ENCODE measurements at regions of chr7 and their contacts with region 1.

Region 1: GRCh38 chr7:25851332-25852210 is 300.4 kb upstream of the NFE2L3 start:
- DNase-seq: peak; percentile 66 to 95 (median 87)

Region 2: DNA sequence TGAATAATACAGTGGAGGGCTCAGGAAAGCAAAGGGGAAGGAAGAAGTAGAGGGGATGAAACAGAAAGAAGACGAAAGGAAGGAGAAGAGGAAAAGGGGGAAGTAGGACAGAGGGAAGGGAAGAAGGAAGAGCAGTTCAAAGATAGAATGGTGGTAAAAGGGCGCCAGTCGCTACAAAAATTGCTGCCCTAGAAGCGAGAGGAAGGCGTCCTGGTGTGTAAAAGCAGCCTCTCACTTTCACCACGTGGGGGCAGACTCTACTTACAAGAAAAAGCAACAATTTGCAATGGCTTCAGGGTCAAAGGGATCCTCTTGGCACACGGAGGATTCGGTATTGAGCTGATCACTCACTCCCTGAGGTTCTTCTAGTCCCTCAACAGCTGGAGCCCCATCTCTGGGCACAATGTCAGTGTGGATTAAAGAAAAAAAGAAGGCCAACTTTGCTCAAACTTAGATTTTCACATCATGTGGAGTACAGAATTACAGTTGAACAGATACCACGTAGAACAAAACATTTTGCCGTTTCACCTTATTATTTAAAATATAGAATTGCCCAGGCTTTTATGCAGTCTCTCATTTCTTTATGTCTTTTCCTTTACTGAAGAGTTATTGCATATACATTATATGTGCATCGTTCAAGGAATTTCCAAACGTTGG is 591.9 kb before region 1 on chr7:
- intact Hi-C with region 1: loop called (anchors 5 kb)
- DNase-seq: peak in 41 of 42 donors; percentile 38 to 91 (median 72)

Region 3: DNA sequence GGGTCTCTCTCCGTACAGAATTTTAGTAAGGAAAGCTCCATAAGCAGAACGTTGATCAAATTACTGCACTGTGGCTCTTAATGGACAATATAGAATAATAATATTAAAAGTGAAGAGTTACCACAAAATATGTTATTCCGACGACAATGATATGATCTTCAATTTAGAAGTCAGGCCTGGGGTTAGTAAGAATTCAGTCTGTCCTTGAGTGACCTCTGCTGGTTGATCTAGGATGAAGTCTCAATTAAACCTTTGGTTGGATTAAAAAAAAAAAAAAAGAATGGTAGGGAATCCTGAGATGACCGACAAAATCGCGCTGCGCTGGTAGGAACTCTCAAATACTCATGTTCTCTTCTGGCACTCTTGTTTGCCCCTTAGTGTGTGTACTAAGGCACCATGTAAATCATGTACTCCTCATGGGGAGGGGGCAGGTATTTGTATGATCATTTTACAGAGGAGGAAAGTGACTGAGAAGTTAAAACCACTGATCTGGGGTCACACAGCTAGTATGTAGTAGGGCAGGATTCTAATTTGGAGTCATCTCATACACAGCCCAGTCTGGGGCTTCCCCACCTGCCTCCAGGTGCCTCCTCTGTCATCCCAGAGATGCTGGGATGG is 462.0 kb before region 1 on chr7:
- intact Hi-C with region 1: loop called (anchors 2 kb)
- DNase-seq: peak in 15 of 42 donors; percentile 18 to 79 (median 48)

Region 4: DNA sequence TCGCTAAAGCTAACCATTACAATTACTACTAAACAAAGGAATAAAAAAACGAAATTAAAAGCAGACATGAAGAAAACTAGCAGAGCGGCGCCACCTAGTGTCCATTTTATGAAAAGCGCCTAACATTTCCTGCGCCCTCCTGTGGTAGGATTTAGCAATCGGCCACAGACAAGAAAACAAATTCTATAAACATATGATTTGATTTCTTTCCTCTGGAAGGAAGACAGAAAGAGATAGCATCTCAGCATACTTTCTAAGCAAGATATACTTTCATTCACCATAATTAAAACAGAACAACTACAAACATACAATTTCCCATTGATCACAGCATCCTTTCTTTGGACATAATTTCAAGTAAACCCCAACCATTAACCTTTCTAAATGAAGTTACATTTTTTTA is 285.6 kb before region 1 on chr7:
- intact Hi-C with region 1: loop called (anchors 2 kb)
- DNase-seq: peak in 41 of 42 donors; percentile 35 to 88 (median 66)

Region 5: DNA sequence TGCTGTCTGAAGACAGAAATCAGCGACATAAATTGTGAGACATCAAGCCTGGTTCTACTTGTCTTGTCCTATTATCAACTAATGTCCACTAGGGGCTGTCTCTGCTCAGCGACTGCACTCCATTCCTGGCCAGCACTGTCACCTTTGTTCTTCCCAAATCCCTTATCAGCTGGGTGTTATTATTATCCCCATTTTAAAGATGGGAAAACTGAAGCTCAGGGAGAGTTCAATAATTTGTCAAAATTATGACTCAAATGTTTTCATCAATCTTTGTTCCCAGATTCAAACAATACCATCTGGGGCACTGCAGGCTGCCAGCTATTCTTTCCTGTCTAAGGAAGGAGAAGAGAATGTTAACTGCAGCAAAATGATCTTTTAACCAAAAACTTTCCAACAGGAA is 131.1 kb before region 1 on chr7:
- intact Hi-C with region 1: loop called (anchors 5 kb)
- DNase-seq: peak in 6 of 42 donors; percentile 10 to 60 (median 16)

Region 6: DNA sequence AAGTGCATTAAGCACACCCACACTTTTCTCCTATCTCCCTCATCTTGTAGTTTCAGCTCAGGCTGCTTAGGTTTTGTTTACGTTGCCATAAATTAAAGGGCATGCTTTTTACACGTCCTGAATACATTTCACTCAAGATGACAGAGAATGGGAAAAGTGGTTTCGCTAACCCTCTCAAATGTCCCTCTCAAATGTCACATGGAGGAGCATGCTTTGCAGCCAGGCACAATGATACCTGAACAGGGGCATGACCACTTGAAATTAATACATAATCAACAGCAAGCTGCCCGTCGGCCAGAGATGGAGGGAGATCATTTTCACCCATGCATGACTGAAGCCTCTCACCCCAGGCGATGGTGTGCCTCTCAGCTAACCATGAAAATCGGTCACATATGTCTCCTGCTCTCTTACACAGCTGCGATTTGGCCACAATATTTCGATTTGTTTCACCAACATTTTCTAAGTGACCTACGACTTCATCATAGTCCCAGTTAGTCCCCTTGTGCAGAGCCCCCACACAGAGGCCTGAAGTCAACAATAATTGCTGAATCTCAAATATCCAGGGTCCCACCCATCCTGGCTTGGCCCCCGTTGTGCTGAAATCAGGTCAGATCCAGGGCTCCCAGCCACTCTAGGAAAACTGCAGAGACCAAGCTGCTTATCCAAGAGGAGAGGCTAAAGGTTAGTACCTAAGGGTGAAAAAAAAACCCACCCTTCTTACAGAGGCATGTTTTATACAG is 73.4 kb before region 1 on chr7:
- intact Hi-C with region 1: no loop called
- DNase-seq: no peak